HepG2 (cell line): ENCODE measurements at regions of chr2 and their contacts with region 1.

Region 1: DNA sequence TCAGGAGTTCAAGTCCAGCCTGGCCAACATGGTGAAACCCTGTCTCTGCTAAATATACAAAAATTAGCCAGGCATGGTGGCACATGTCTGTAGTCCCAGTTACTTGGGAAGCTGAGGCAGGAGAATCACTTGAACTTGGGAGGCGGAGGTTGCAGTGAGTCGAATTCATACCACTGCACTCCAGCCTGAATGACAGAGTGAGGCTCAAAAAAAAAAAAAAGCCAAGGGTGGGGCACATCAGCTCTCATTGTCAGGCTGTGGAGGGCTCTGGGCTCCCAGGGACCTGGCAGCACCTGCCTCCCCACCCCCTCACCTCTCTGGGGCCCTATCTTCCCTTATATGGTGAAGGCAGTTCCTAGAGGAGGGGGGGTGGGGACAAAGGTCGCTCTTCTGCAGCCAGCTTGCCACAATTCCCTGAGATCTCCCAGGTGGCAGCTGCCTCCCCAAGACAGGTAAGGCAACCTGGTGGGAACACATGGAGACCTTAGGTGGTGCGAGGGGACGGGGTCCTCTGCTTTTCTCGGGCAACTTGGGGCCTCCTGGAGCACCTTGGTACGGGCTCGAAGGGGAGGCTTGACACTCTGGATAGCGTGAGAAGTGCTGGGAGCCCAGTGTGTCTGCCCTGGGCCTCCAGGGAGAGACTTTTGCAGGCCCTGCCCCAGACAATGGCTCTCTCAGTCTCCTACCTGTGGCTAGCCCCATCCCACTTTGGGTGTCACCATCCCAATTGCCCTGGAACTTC is at the start of gene VIL1:
- DNase-seq: peak; percentile 94
- ATAC-seq: peak; percentile 89
- H3K4me3 ChIP-seq: peak within 1 kb of the TSS; percentile 73 to 89 (median 78)
- H3K27ac ChIP-seq: peak within 1 kb of the TSS; percentile 76
- H3K4me1 ChIP-seq: peaks cover 57% of the 10 kb centered on the region
- H3K27me3 ChIP-seq: no peaks in the 10 kb centered on the region; a peak in 1 of 5 replicates
- CTCF ChIP-seq: peak; percentile 15; the same call in 1 of the 2 replicates
- EP300 ChIP-seq: peak in 1 of 2 experiments; percentile 75; a peak in 2 of 4 replicates
- POLR2A ChIP-seq: peak; percentile 92 to 99
- RAD21 ChIP-seq: peak; percentile 38; the same call in 1 of the 2 replicates
- total RNA-seq, gene VIL1: 301 and 337 TPM in 2 replicates

Region 2: DNA sequence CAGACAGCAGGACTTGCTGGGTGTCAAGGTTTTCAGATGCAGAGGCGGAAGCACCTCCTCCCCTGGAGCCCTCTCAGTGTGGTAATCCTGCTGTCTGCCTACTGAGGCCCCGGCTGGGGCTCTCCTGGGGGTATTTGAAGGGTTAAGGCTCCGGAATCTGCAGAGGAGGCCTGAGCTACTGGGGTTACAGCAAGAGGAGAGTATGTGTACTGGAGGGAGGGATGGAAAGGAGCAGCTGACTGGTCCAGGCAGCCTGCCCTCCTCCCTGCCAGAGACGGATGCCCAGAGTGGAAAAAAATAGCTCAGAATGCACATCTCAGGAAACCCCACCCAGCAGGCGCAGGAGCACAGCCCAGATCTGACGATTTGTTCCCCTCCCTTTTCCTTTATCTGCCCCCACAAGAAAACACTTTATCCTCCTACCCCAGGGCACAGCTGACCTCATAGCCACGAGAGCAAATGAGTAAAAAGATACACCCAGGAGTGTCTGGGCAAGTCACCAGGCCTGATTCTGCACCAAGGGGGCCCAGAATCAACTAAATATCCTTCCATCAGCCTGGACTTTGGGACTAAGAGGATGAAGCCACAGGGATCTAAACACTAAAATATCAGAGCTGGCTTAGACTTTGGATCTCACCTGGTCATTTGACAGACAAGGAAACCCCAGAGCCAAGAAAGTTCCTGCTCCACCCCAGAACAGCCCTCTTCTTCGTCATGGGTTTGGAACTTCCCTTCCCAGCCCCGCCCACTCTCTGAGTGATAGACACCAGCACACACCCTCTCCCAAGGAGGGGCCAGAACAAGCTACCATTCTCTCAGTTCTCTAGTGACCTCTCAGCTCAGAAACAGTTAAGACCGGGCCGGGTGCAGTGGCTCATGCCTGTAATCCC is 132.1 kb before region 1 on chr2:
- CTCF ChIA-PET with region 1: no interaction called
- POLR2A ChIA-PET with region 1: interaction called, 10 read pairs
- in situ Hi-C with region 1: no loop called
- intact Hi-C with region 1: no loop called
- DNase-seq: peak; percentile 96
- ATAC-seq: peak; percentile 67
- H3K4me3 ChIP-seq: peak overlapping the region in 1 of 3 experiments; percentile 43; a peak in 2 of 6 replicates
- H3K27ac ChIP-seq: peak overlapping the region; percentile 64
- H3K4me1 ChIP-seq: peaks cover 76% of the 10 kb centered on the region
- H3K27me3 ChIP-seq: no peaks in the 10 kb centered on the region; a peak in 1 of 5 replicates
- CTCF ChIP-seq: no peak
- EP300 ChIP-seq: peak in 1 of 2 experiments; percentile 50; a peak in 1 of 4 replicates
- POLR2A ChIP-seq: no peak; a peak in 1 of 4 replicates
- RAD21 ChIP-seq: no peak

Region 3: DNA sequence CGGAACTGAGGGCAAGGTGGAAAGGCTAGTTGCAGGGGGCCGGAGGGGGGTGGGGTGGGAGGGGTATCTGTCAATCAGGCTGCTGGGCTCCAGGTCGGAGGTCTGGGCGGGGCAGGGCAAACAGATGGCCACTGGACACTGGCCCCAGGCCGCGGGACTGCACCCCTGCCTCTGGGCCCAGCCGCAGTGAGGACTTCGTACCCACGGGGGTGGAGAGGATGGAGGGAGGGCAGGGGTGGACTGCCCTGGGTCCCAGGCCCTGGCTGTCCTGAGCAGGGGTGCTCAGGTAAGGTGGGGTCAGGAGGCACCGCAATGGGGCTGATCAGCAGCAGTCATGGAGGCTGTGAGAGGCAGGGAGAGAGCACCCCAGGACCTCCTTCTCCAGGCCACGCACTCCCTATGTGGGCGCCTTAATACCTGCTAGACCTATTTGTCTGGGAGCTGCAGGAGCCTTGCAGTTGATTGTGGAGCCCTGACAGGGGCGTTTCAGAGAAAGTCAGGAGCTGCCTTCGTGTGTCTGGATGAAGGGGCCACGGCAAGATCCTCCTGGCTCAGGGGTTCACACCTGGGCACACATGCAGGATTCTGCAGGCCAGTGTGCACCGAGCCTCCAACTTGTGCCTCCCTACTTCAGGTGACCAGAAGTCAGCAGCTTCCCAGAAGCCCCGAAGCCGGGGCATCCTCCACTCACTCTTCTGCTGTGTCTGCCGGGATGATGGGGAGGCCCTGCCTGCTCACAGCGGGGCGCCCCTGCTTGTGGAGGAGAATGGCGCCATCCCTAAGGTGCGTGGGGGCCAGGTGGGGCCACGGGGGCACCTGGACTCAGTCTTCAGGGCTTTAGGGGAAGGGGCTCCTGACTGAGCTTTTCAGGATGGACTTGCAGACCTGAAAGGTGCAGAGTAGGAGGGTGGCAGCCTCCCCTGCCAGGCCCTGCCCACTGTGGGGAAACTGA is 17.7 kb before region 1 on chr2:
- CTCF ChIA-PET with region 1: no interaction called
- POLR2A ChIA-PET with region 1: interaction called, 56 read pairs
- in situ Hi-C with region 1: no loop called
- intact Hi-C with region 1: no loop called
- DNase-seq: peak; percentile 95
- ATAC-seq: peak; percentile 51
- H3K4me3 ChIP-seq: peak overlapping the region; percentile 85 to 97 (median 92)
- H3K27ac ChIP-seq: peak overlapping the region; percentile 99
- H3K4me1 ChIP-seq: peaks cover 58% of the 10 kb centered on the region
- H3K27me3 ChIP-seq: no peaks in the 10 kb centered on the region; a peak in 1 of 5 replicates
- CTCF ChIP-seq: peak; percentile 45
- EP300 ChIP-seq: peak; percentile 37 to 84
- POLR2A ChIP-seq: peak in 1 of 2 experiments; percentile 63; a peak in 2 of 4 replicates
- RAD21 ChIP-seq: 0 out of 2 replicates have a peak, but pooled peaks have one; percentile 47

Region 4: GRCh38 chr2:218406209-218406948 is 12.5 kb before region 1 on chr2:
- CTCF ChIA-PET with region 1: no interaction called
- POLR2A ChIA-PET with region 1: interaction called, 56 read pairs
- in situ Hi-C with region 1: no loop called
- intact Hi-C with region 1: no loop called
- DNase-seq: peak; percentile 92
- ATAC-seq: peak; percentile 78
- H3K4me3 ChIP-seq: peak overlapping the region; percentile 67 to 86 (median 67)
- H3K27ac ChIP-seq: peak overlapping the region; percentile 79
- H3K4me1 ChIP-seq: peaks cover 61% of the 10 kb centered on the region
- H3K27me3 ChIP-seq: no peaks in the 10 kb centered on the region
- CTCF ChIP-seq: peak; percentile 98
- EP300 ChIP-seq: peak; percentile 37 to 53; a peak in 2 of 4 replicates
- POLR2A ChIP-seq: peak in 1 of 2 experiments; percentile 23; a peak in 1 of 4 replicates
- RAD21 ChIP-seq: peak; percentile 98

Region 5: DNA sequence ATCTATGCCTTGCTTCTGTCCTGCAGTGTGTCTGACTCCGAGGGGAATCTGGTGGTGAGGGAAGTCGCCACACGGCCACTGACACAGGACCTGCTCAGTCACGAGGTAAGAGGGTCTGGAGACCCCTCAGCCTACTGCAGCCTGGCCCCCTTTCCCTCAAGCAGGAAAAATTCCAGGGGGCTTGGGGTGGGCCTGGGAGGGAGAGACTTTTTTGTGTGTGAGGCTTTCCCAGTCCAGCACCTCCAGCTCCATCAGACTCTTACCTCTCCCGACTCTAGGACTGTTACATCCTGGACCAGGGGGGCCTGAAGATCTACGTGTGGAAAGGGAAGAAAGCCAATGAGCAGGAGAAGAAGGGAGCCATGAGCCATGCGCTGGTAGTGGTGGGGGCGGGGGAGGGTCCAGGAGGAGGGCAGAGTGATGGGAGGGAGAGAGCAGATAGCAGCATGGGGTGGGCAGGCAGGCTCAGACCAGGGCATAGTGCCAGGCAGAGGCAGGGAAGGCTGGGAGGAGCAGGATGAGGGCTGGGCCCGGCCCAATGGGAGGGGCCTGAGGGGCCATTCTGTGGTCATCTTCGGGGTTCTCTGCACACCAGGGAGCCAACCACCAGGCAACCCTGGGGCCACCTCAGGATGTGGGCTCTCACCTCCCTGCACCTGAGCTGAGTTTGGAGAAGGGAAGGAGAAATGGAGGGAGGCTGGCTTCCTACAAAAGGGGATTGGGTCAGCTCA is 10.8 kb after region 1 on chr2:
- CTCF ChIA-PET with region 1: no interaction called
- POLR2A ChIA-PET with region 1: interaction called, 59 read pairs
- in situ Hi-C with region 1: no loop called
- intact Hi-C with region 1: no loop called
- DNase-seq: no peak
- ATAC-seq: peak; percentile 10
- H3K4me3 ChIP-seq: no peak overlapping the region
- H3K27ac ChIP-seq: no peak overlapping the region
- H3K4me1 ChIP-seq: peaks cover 7% of the 10 kb centered on the region
- H3K27me3 ChIP-seq: no peaks in the 10 kb centered on the region
- CTCF ChIP-seq: no peak
- EP300 ChIP-seq: no peak
- POLR2A ChIP-seq: no peak
- RAD21 ChIP-seq: no peak

Region 6: DNA sequence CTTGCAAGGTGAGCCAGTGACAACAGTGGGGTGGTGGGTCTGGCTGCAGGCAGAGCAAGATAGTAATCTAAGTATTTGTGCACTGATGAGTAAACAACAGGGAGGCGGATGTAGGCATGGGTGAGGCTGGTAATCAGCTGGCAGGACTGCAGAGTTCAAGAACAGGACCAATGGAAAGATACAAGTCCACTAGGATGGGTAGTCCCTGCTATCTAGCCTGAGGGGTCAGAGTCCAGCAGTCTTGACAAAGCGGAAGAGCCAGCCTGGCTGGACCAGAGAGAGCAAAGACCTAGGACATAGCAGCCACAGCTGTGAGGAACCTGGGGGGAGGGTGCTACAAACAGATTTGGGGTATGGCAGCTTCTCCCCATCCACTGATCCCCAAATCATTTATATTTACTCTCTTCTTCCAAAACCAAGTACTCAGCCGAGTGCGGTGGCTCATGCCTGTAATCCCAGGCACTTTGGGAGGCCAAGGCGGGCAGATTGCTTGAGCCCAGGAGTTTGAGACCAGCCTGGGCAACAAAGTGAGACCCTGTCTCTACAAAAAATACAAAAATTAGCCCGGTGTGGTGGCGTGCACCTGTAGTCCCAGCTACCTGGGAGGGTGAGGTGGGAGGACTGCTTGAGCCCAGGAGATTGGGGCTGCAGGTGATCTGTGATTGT is 25.9 kb after region 1 on chr2:
- CTCF ChIA-PET with region 1: no interaction called
- POLR2A ChIA-PET with region 1: interaction called, 36 read pairs
- in situ Hi-C with region 1: no loop called
- intact Hi-C with region 1: loop called (anchors 2 kb)
- DNase-seq: peak; percentile 99
- ATAC-seq: peak; percentile 92
- H3K4me3 ChIP-seq: 0 out of 6 replicates have a peak overlapping the region, but pooled peaks of 1 of the 3 experiments have one; percentile 19
- H3K27ac ChIP-seq: peak overlapping the region; percentile 67
- H3K4me1 ChIP-seq: peaks cover 75% of the 10 kb centered on the region
- H3K27me3 ChIP-seq: no peaks in the 10 kb centered on the region
- CTCF ChIP-seq: peak; percentile 36
- EP300 ChIP-seq: peak; percentile 49 to 94; a peak in 3 of 4 replicates
- POLR2A ChIP-seq: peak in 1 of 2 experiments; percentile 34; a peak in 2 of 4 replicates
- RAD21 ChIP-seq: peak; percentile 57; the same call in 1 of the 2 replicates

Region 7: GRCh38 chr2:218476676-218477075 is 57.8 kb after region 1 on chr2:
- CTCF ChIA-PET with region 1: no interaction called
- POLR2A ChIA-PET with region 1: no interaction called
- in situ Hi-C with region 1: no loop called
- intact Hi-C with region 1: no loop called
- DNase-seq: no peak
- ATAC-seq: no peak
- H3K4me3 ChIP-seq: no peak overlapping the region
- H3K27ac ChIP-seq: no peak overlapping the region
- H3K4me1 ChIP-seq: no peaks in the 10 kb centered on the region
- H3K27me3 ChIP-seq: no peaks in the 10 kb centered on the region
- CTCF ChIP-seq: no peak
- EP300 ChIP-seq: no peak
- POLR2A ChIP-seq: no peak
- RAD21 ChIP-seq: no peak

Region 8: DNA sequence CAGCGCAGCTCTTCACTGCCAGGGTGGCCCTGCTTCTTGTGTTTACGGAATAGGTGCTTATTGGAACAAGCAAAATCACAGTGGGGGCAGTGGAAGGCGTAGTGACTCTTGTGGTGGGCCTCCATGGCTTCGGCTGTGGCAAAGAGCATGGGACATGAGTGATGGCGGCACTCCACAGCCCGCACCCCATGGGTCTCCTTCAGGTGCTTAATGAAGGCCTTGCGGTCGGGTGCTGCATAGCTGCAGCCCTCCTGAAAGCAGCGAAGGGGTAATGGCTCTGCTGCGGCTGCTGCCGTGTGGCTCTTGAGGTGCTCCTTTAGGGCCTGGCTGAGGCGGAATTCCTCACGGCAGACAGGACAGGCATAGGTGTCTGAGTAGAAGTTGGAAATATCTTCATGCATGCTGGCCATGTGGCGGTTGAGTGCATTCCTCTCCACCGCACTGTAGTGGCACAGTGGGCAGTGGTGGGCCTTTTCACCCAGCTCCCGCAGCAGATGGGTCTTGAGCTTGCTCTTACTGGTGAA is 230.0 kb after region 1 on chr2:
- CTCF ChIA-PET with region 1: no interaction called
- POLR2A ChIA-PET with region 1: no interaction called
- in situ Hi-C with region 1: no loop called
- intact Hi-C with region 1: no loop called
- DNase-seq: no peak
- ATAC-seq: peak; percentile 30
- H3K4me3 ChIP-seq: no peak overlapping the region
- H3K27ac ChIP-seq: no peak overlapping the region
- H3K4me1 ChIP-seq: peaks cover 11% of the 10 kb centered on the region; the same call in 1 of the 2 replicates
- H3K27me3 ChIP-seq: no peaks in the 10 kb centered on the region
- CTCF ChIP-seq: no peak
- EP300 ChIP-seq: no peak
- POLR2A ChIP-seq: no peak
- RAD21 ChIP-seq: no peak